Heart right ventricle (tissue), 16 donors: ENCODE measurements at regions of chr9 and their contacts with region 1.

Region 1: DNA sequence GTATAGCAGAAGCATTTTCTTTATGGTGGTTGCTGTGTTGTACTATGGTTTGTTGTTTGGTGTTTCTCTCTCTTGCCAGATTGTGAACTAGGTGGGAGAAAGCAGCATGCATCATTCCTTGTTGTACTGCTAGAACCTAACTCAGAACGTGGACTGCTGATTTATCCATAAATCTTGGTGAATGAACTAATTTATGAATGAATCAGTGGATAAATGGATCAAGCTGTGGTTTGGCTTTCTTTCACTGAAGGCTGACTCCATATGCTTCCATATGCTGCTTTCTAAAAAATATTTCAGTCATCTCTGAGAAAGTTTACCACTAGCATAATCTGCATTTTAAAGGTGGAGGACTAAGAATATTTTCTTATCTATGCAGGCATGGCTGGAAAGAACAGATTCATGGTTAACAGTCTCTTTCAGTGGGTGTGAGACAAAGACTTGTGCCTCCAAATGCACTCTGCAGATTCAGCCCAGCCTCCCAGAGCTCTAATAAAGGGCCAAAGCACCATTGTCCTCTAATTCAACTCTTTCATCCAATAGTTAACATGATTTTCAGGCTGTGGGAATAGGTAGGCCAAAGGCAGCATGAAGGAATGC is 237.7 kb downstream of the SH3GL2 start:
- DNase-seq: no peak
- ATAC-seq: no peak
- H3K4me3 ChIP-seq: no peak overlapping the region
- H3K27ac ChIP-seq: no peak overlapping the region
- H3K4me1 ChIP-seq: no peaks in the 10 kb centered on the region
- H3K27me3 ChIP-seq: no peaks in the 10 kb centered on the region
- CTCF ChIP-seq: no peak

Region 2: GRCh38 chr9:17725399-17726010 is 91.0 kb before region 1 on chr9:
- intact Hi-C with region 1: no loop called
- DNase-seq: no peak
- ATAC-seq: no peak
- H3K4me3 ChIP-seq: no peak overlapping the region
- H3K27ac ChIP-seq: no peak overlapping the region
- H3K4me1 ChIP-seq: no peaks in the 10 kb centered on the region
- H3K27me3 ChIP-seq: no peaks in the 10 kb centered on the region
- CTCF ChIP-seq: no peak

Region 3: DNA sequence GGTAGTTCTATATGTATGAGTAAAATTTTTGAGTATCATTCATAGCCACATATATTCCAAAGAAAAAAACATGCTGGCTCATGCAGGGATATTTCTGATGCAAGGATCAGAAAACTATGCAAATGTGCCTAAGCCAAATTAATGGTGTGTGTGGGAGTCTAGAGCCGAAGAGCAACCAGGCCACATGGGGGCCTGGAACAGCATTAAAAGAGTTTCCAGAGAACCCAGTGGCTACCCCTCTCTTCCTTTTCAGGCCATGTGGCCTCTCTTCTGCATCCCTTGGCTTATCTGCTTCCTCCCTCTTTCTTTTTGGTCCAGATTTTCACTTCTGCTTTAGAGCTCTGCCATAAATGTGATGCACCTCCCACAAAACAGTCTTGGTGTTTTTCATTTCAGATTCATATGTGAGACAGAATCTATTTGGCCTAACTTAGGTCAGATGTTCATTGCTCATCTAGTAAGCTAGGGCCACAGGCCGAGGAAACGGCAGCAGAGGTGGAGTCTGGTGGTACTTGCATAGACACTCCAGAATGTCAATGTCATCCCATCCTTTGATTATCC is 62.4 kb after region 1 on chr9:
- intact Hi-C with region 1: no loop called
- DNase-seq: no peak
- ATAC-seq: no peak
- H3K4me3 ChIP-seq: no peak overlapping the region
- H3K27ac ChIP-seq: no peak overlapping the region
- H3K4me1 ChIP-seq: no peaks in the 10 kb centered on the region
- H3K27me3 ChIP-seq: no peaks in the 10 kb centered on the region
- CTCF ChIP-seq: no peak

Region 4: DNA sequence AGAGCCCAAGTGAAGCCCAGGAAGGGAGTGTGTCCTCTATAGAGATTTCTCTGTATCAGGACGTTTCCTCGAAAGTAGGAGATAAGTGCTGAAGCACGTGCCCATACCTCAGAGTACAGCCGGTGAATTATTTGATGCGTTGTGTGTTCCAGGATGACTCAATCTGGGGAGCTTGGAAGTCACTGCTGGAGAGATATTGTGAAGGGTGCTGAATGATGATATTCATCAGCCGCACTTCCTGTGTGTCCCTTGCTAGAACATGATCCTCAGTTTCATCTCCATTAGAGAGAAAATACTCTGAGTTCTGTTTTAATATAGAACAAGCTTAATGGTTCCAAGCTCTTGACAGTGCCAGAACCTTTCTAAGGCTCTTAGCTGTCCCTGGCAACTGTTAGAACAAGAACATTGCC is 255.1 kb after region 1 on chr9:
- intact Hi-C with region 1: loop called in 1 of 10 experiments (anchors 1 kb)
- DNase-seq: no peak
- ATAC-seq: peak in 5 of 8 donors; percentile 28 to 94 (median 71)
- H3K4me3 ChIP-seq: no peak overlapping the region
- H3K27ac ChIP-seq: no peak overlapping the region
- H3K4me1 ChIP-seq: peaks cover 0 to 2% (median 0%) of the 10 kb centered on the region in 9 donors
- H3K27me3 ChIP-seq: no peaks in the 10 kb centered on the region
- CTCF ChIP-seq: no peak

Region 5: DNA sequence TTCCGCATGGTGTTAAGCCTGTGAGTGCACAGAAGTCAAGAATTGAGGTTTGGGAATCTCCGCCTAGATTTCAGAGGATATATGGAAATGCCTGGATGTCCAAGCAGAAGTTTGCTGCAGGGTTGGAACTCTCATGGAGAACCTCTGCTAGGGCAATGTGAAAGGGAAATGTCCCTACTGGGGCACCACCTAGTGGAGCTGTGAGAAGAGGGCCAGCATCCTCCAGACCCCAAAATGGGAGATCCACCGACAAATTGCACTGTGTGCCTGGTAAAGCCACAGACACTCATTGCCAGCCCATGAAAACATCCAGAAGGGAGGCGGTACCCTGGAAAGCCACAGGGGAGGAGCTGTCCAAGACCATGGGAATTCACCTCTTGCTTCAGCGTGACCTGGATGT is 1220.1 kb after region 1 on chr9:
- intact Hi-C with region 1: loop called in 3 of 10 experiments (anchors 5 to 10 kb)
- DNase-seq: no peak
- ATAC-seq: no peak
- H3K4me3 ChIP-seq: no peak overlapping the region
- H3K27ac ChIP-seq: no peak overlapping the region
- H3K4me1 ChIP-seq: no peaks in the 10 kb centered on the region
- H3K27me3 ChIP-seq: peaks cover 0 to under 1% (median 0%) of the 10 kb centered on the region in 7 donors
- CTCF ChIP-seq: no peak